ENCODE measurements at regions of chr1 and their contacts with region 1.

Region 1: GRCh38 chr1:10430216-10431069 is at the start of gene CENPS:
- DNase-seq: no peak
- H3K4me3 ChIP-seq: peak within 1 kb of the TSS; percentile 80
- H3K27me3 ChIP-seq: no peaks in the 10 kb centered on the region
- CTCF ChIP-seq: peak; percentile 76
- polyA plus RNA-seq, gene CENPS: 8.5 and 9.6 TPM in 2 replicates

Region 2: GRCh38 chr1:10444795-10445397 is 14.5 kb after region 1 on chr1:
- CTCF ChIA-PET with region 1: interaction called, 15 read pairs
- POLR2A ChIA-PET with region 1: no interaction called
- DNase-seq: no peak
- H3K4me3 ChIP-seq: no peak overlapping the region
- H3K27me3 ChIP-seq: no peaks in the 10 kb centered on the region
- CTCF ChIP-seq: no peak

Region 3: DNA sequence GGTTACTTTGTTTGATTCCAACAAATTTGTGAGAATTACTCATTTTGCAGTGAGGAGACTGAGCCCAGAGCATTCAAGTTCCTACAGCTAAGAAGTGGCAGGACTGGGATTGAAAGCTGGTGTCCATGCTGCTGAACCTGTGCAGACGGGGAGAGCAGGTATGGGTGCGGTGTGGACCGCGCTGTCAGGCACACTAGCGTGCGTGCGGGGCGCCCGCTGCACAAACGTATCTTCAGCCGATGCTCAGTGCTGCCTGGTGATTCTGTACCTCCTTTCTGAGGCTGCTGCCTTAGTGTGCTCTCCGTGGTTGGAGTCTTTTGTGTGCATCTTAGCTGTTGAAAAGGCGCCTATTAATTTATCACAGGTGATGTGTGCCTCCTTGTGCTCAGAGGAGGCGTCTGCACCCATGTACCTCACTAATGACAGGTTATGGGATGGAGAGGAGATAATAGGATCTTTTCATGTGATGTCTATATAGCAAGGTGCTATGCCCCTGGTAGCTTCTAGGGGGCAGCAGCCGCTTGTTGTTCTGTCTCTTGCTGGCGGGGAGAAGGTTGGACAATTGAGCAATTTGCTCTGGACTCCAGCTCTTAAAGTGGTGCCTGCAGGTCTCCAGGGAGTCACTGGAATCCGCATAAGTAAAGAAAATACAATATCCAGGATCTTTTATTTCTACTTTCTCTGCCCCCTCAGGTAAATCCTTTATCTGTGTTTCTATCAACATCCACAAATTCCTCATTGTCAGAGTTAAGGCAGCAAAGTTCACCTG is 76.9 kb after region 1 on chr1:
- CTCF ChIA-PET with region 1: interaction called, 11 read pairs
- POLR2A ChIA-PET with region 1: no interaction called
- DNase-seq: no peak
- H3K4me3 ChIP-seq: no peak overlapping the region
- H3K27me3 ChIP-seq: no peaks in the 10 kb centered on the region
- CTCF ChIP-seq: peak; percentile 93